ENCODE measurements at regions of chr11 and their contacts with region 1.

Region 1: DNA sequence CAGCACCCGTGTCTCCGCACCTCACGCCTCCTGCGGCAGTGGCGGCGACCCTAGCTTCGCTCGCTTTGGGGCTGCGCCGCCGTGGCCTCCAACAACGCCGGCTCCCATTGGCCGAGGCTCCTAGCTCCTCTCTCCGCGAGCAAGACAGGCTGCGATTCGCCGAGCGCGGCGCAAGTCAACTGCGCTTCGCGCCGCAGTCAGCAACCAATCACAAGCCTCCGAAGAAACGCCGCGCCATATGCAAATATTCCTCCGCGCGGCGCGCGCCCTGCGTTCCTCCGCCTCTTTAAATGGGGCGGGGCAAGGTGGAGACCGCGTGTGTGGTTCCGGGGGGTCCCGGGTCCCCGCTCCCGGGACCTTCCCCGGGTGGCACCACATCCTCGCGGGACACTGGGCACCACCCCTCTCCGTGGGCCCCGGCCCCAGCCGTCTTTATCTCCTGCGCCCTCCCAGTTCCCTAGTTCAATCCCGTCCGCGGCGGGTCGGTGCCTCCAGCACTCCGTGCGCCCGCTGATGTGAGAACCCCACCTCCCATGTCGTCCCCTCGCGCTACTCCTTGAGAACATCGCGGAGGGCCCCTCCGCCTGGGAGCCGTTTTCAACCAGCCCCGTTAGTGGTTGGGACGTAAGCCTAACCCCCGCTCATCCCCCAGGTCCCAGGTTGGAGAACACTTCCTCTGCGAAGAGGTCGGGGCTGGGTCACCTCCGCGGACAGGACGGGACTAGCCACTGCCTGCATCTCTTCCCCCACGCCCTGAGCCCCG is at the start of gene NAP1L4:
- DNase-seq: peak; percentile 97
- H3K4me3 ChIP-seq: peak within 1 kb of the TSS; percentile 64 to 97 (median 95)
- H3K27ac ChIP-seq: peak within 1 kb of the TSS; percentile 64
- H3K4me1 ChIP-seq: peaks cover 33% of the 10 kb centered on the region
- H3K27me3 ChIP-seq: no peaks in the 10 kb centered on the region
- CTCF ChIP-seq: no peak
- POLR2A ChIP-seq: peak; percentile 88
- total RNA-seq, gene NAP1L4: 173 and 177 TPM in 2 replicates

Region 2: DNA sequence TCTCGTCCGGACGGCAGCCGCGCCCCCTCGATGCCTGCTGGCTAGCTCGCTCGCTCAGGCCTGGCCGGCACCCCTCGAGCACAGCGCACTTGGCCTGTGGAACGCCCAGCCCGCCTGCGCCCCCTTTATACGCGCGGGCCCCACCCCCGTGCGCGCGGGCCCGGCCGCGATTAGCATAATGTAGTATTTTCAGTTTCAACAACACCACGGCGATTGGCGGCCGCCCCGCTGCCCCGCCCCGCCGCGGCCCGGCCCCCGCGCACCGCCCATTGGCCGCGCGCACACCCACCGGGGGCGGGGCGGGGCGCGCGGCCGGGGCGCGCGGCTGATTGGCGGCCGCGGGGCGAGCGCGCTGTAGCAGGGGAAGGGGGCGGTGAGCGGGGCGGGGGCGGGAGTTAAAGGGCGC is 106.7 kb before region 1 on chr11 and contains the start of gene CDKN1C:
- CTCF ChIA-PET with region 1: no interaction called
- POLR2A ChIA-PET with region 1: no interaction called
- dilution Hi-C with region 1: no loop called
- intact Hi-C with region 1: no loop called
- DNase-seq: peak; percentile 88
- H3K4me3 ChIP-seq: peak within 1 kb of the TSS in 2 of 3 experiments; percentile 12 to 44
- H3K27ac ChIP-seq: no peak within 1 kb of the TSS
- H3K4me1 ChIP-seq: peaks cover 8% of the 10 kb centered on the region
- H3K27me3 ChIP-seq: peaks cover 3 to 14% of the 10 kb centered on the region in 2 experiments
- CTCF ChIP-seq: no peak
- POLR2A ChIP-seq: no peak
- total RNA-seq, gene CDKN1C: 5.2 and 9.0 TPM in 2 replicates

Region 3: DNA sequence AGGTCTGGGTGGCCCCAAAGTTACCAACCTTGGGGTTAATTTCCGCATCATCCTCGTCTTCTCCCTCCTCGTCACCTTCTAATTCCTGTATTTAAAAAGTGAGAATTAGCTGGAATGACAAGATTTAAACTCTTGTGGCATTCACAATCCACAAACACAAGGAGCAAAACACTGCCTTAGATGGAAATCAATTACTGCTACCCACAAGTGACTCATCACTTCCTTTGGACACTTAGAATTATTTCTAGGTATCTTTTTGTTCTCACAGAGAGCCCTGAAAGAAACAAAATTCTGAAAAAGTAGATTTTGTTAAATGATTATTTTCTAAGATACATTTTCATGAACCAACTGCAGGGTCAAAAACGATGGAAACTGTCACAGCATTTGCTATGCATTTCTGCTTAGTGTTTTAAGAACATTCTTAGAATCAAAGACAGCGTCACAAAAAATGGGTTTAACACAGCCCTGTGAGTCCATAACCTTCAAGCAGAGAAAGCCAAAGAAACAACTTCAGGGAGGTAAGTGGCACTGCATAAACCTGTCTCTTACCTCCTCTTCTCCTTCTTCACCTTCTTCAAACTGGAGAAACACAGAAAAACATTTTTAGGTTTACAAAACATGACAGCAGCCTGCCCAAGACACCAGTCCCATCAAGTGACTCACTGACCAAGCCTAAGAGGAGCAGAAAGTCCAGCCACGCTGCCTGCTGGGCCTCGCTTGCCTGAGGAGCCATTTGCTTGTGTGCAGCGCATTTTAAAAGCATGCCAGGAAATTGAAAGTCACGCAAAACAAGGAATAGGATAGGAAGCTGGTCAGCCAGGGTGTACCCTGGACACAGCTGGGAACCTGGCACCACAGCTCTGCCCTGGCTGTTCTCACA is 40.9 kb before region 1 on chr11:
- CTCF ChIA-PET with region 1: no interaction called
- POLR2A ChIA-PET with region 1: no interaction called
- dilution Hi-C with region 1: no loop called
- intact Hi-C with region 1: loop called (anchors 2 kb)
- DNase-seq: peak; percentile 74
- H3K4me3 ChIP-seq: peak overlapping the region in 1 of 3 experiments; percentile 24
- H3K27ac ChIP-seq: peak overlapping the region; percentile 81
- H3K4me1 ChIP-seq: peaks cover 35% of the 10 kb centered on the region
- H3K27me3 ChIP-seq: no peaks in the 10 kb centered on the region
- CTCF ChIP-seq: no peak
- POLR2A ChIP-seq: peak; percentile 42

Region 4: GRCh38 chr11:3057069-3057963 is 64.9 kb after region 1 on chr11 and contains the start of gene CARS1:
- CTCF ChIA-PET with region 1: no interaction called
- POLR2A ChIA-PET with region 1: no interaction called
- dilution Hi-C with region 1: no loop called
- intact Hi-C with region 1: loop called (anchors 1 kb)
- DNase-seq: peak; percentile 89
- H3K4me3 ChIP-seq: peak within 1 kb of the TSS; percentile 70 to 84 (median 83)
- H3K27ac ChIP-seq: peak within 1 kb of the TSS; percentile 68
- H3K4me1 ChIP-seq: peaks cover 9% of the 10 kb centered on the region
- H3K27me3 ChIP-seq: peaks cover 0 to 1% of the 10 kb centered on the region in 2 experiments
- CTCF ChIP-seq: no peak
- POLR2A ChIP-seq: peak; percentile 70
- total RNA-seq, gene CARS1: 66.2 and 72.3 TPM in 2 replicates

Measured in endothelial cell of umbilical vein (primary cell).